GM23248 (cell line): ENCODE measurements at regions of chr17 and their contacts with region 1.

Region 1: GRCh38 chr17:77319211-77320043 is 178.7 kb downstream of the SEC14L1 start:
- DNase-seq: peak; percentile 99
- H3K4me3 ChIP-seq: peak overlapping the region; percentile 91
- H3K27ac ChIP-seq: peak overlapping the region; percentile 99
- H3K4me1 ChIP-seq: peaks cover 35% of the 10 kb centered on the region
- H3K27me3 ChIP-seq: no peaks in the 10 kb centered on the region

Region 2: GRCh38 chr17:77374170-77374936 is 54.9 kb after region 1 on chr17:
- in situ Hi-C with region 1: no loop called
- DNase-seq: peak; percentile 86
- H3K4me3 ChIP-seq: peak overlapping the region; percentile 75
- H3K27ac ChIP-seq: peak overlapping the region; percentile 81
- H3K4me1 ChIP-seq: peaks cover 35% of the 10 kb centered on the region
- H3K27me3 ChIP-seq: no peaks in the 10 kb centered on the region

Region 3: GRCh38 chr17:77494664-77495435 is 175.4 kb after region 1 on chr17:
- in situ Hi-C with region 1: loop called (anchors 10 kb)
- DNase-seq: peak; percentile 83
- H3K4me3 ChIP-seq: no peak overlapping the region
- H3K27ac ChIP-seq: no peak overlapping the region
- H3K4me1 ChIP-seq: no peaks in the 10 kb centered on the region
- H3K27me3 ChIP-seq: no peaks in the 10 kb centered on the region